T-cell (primary cell): ENCODE measurements at regions of chr17 and their contacts with region 1.

Region 1: DNA sequence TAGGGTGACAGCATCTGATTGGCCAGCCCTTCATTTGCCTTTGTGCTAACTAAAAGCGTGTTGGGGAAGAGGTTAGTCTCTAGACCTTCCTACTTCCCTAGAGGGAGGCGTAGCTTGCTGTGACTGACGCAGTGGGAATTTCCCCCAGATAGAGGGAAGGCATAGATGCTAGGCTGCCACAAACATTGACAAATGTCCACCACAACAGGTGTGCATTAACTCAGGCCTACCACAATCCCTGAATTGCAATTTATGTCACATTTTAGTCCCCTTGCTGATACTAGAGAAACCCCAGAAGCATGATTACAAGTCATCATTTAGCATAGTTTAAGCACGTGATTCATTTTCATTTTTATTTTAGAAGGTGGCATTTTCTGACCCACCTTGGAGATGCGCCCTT is 76.3 kb upstream of the WSB1 start:
- DNase-seq: peak in 3 of 35 experiments; percentile 8 to 32 (median 20)
- ATAC-seq: peak in 1 of 4 experiments; percentile 49
- H3K4me3 ChIP-seq: no peak overlapping the region
- H3K4me3 Mint-ChIP-seq: no peak overlapping the region
- H3K27ac ChIP-seq: no peak overlapping the region
- H3K27ac Mint-ChIP-seq: peak overlapping the region in 1 of 2 donors; percentile 56
- H3K4me1 ChIP-seq: peaks cover 0 to 12% of the 10 kb centered on the region in 2 experiments
- H3K4me1 Mint-ChIP-seq: peaks cover 8 to 21% (median 12%) of the 10 kb centered on the region in 3 donors
- H3K27me3 ChIP-seq: peaks cover 0 to 2% of the 10 kb centered on the region in 2 experiments
- H3K27me3 Mint-ChIP-seq: peaks cover 0 to 1% of the 10 kb centered on the region in 2 donors

Region 2: DNA sequence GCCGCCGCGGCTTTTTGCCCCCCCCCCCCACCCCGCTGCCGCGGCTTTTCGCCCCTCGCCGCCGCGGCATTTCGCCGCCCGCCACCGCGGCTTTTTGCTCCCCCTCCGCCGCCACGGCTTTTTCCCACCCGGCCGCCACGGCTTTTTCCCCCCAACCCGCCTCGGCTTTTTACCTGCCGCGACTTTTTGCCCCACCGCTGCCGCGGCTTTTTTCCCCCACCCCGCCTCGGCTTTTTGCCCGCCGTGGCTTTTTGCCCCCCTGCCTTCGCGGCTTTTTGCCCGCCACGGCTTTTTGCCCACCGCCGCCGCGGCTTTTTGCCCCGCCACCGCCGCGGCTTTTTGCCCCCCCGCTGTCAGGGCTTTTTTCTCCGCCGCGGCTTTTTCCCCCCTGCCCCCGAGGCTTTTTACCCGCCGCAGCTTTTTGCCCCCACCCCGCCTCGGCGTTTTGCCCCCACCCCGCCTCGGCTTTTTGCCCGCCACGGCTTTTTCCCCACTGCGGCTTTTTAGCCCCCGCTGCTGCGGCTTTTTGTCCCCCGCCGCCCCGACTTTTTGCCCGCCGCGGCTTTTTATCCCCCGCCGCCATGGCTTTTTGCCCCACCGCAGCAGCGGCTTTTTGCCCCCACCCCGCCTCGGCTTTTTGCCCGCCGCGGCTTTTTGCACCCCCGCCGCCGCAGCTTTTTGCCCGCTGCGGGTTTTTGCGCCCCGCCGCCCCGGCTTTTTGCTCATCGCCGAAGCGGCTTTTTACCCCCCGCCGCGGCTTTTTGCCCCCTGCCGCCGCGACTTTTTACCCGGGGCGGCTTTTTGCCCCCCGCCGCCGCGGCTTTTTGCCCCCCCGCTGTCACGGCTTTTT is 451.5 kb before region 1 on chr17:
- CTCF ChIA-PET with region 1: no interaction called
- POLR2A ChIA-PET with region 1: no interaction called
- DNase-seq: no peak
- ATAC-seq: no peak
- H3K4me3 ChIP-seq: no peak overlapping the region
- H3K4me3 Mint-ChIP-seq: no peak overlapping the region
- H3K27ac ChIP-seq: no peak overlapping the region
- H3K27ac Mint-ChIP-seq: no peak overlapping the region
- H3K4me1 ChIP-seq: no peaks in the 10 kb centered on the region
- H3K4me1 Mint-ChIP-seq: no peaks in the 10 kb centered on the region
- H3K27me3 ChIP-seq: no peaks in the 10 kb centered on the region
- H3K27me3 Mint-ChIP-seq: peaks cover 4 to 7% of the 10 kb centered on the region in 2 donors

Region 3: GRCh38 chr17:27153005-27153404 is 64.6 kb before region 1 on chr17:
- CTCF ChIA-PET with region 1: no interaction called
- POLR2A ChIA-PET with region 1: no interaction called
- DNase-seq: no peak
- ATAC-seq: no peak
- H3K4me3 ChIP-seq: no peak overlapping the region
- H3K4me3 Mint-ChIP-seq: no peak overlapping the region
- H3K27ac ChIP-seq: no peak overlapping the region
- H3K27ac Mint-ChIP-seq: no peak overlapping the region
- H3K4me1 ChIP-seq: no peaks in the 10 kb centered on the region
- H3K4me1 Mint-ChIP-seq: no peaks in the 10 kb centered on the region
- H3K27me3 ChIP-seq: peaks cover 0 to 2% of the 10 kb centered on the region in 2 experiments
- H3K27me3 Mint-ChIP-seq: no peaks in the 10 kb centered on the region

Region 4: GRCh38 chr17:27299384-27300049 is 81.9 kb after region 1 on chr17:
- CTCF ChIA-PET with region 1: interaction called in 1 of 2 experiments, 12 read pairs
- POLR2A ChIA-PET with region 1: no interaction called
- DNase-seq: no peak
- ATAC-seq: no peak
- H3K4me3 ChIP-seq: no peak overlapping the region
- H3K4me3 Mint-ChIP-seq: peak overlapping the region in 2 of 3 donors; percentile 7 to 13
- H3K27ac ChIP-seq: no peak overlapping the region
- H3K27ac Mint-ChIP-seq: peak overlapping the region in 1 of 2 donors; percentile 34
- H3K4me1 ChIP-seq: peaks cover 6 to 29% of the 10 kb centered on the region in 2 experiments
- H3K4me1 Mint-ChIP-seq: peaks cover 75 to 79% (median 78%) of the 10 kb centered on the region in 3 donors
- H3K27me3 ChIP-seq: no peaks in the 10 kb centered on the region
- H3K27me3 Mint-ChIP-seq: no peaks in the 10 kb centered on the region